ENCODE measurements at regions of chr7 and their contacts with region 1.

Region 1: DNA sequence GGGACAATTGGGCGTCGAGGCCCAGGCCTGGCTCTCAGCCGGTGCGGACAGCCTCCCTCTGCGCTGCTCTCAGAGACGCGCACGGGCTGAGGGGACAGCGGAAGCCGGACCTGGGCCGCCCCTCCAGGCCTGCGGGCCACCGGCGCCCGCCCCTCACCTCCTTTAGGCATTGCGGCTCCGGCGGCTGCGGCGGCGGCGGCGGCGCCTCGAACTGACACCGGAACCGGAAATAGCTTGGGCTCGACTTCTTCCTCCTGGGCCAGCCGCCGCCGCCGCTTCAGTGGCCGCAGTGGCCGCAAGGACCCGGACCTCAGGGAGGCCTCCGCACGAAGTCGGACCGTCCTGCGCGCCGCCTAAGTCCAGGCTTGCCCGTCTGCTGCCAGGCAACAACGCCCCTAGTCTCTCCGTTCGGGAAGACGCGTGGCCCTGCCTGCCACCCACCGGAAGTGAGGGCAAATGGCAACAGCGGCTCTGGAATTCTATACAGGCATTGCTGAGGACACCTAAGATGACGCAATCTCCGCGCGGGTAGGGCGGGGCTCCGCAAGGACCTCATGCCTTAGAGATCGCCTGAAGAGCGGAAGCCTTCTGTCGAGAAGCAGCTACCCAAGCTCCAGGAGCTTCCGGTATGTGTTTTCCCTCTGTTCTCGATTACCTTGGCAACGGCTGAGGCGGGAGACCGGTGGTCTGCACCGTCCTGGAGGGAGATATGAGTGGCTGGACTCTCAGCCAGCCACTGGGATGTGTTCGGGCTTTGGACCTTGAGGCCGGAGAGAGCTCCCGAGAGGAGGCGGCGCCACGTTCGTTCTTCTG is at the starts of genes BUD31 and PDAP1:
- DNase-seq: peak; percentile 96
- ATAC-seq: peak; percentile 88
- H3K4me3 Mint-ChIP-seq: peak within 1 kb of the TSS; percentile 100
- H3K27ac Mint-ChIP-seq: peak within 1 kb of the TSS; percentile 99
- H3K4me1 Mint-ChIP-seq: peaks cover 55% of the 10 kb centered on the region
- H3K27me3 Mint-ChIP-seq: no peaks in the 10 kb centered on the region
- CTCF ChIP-seq: no peak
- total RNA-seq, gene BUD31: 93.7 and 113 TPM in 2 replicates
- total RNA-seq, gene PDAP1: 105 and 134 TPM in 2 replicates

Region 2: DNA sequence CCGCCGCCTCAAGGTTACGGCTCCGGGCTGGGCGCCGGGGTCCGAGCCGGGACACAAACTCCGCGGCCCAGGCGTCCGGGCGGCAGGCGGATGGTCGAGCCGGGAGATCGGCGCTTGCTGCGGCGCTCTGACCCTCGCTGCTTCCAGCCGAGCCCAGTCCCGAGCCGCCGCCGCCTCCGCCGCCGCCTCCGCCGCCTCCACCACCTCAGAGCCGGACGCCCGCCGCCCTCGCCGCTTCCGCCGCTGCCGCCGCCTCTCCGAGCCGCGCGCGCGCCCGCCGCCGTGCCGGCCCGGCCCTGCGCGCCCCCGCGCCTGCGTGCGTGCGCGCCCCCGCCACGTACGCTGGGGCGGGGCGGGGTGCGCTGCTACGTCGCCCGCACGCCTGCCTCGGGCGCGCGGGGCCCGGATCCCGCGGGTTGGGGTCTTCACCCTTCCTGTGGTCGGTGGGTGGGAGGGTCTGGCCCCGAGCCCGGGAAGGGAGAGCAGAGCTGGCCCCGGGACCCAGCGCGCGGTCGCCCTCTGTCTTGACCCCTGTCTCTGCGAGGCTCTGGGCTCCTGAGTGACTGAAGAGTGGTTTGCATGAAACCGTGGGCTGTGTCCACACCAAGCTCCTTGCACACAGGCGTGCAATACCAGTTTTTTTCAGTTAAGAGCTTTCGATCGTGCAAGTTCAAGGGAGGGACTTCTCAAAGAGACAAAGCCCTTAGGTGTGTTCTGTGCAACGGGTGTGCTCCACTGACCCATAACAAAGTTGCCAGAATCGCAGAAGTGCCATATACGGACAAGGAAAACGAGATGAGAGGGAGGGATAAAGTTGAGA is 264.5 kb before region 1 on chr7 and contains the start of gene SMURF1:
- CTCF ChIA-PET with region 1: no interaction called
- POLR2A ChIA-PET with region 1: no interaction called
- intact Hi-C with region 1: loop called (anchors 10 kb)
- DNase-seq: peak; percentile 86
- ATAC-seq: peak; percentile 55
- H3K4me3 Mint-ChIP-seq: peak within 1 kb of the TSS; percentile 89
- H3K27ac Mint-ChIP-seq: peak within 1 kb of the TSS; percentile 81
- H3K4me1 Mint-ChIP-seq: peaks cover 39% of the 10 kb centered on the region
- H3K27me3 Mint-ChIP-seq: peaks cover 7% of the 10 kb centered on the region
- CTCF ChIP-seq: no peak
- total RNA-seq, gene SMURF1: 21.6 and 23.1 TPM in 2 replicates

Region 3: GRCh38 chr7:99374103-99375064 is 34.2 kb before region 1 on chr7 and contains the start of gene ARPC1B:
- CTCF ChIA-PET with region 1: interaction called, 4 read pairs
- POLR2A ChIA-PET with region 1: interaction called, 189 read pairs
- intact Hi-C with region 1: loop called (anchors 1 kb)
- DNase-seq: peak; percentile 78
- ATAC-seq: peak; percentile 74
- H3K4me3 Mint-ChIP-seq: peak within 1 kb of the TSS; percentile 83
- H3K27ac Mint-ChIP-seq: peak within 1 kb of the TSS; percentile 79
- H3K4me1 Mint-ChIP-seq: peaks cover 33% of the 10 kb centered on the region
- H3K27me3 Mint-ChIP-seq: no peaks in the 10 kb centered on the region
- CTCF ChIP-seq: no peak
- total RNA-seq, gene ARPC1B: 300 and 312 TPM in 2 replicates

Region 4: GRCh38 chr7:99392677-99393354 is 15.8 kb before region 1 on chr7:
- CTCF ChIA-PET with region 1: interaction called, 5 read pairs
- POLR2A ChIA-PET with region 1: interaction called, 54 read pairs
- intact Hi-C with region 1: loop called (anchors 1 kb)
- DNase-seq: peak; percentile 79
- ATAC-seq: peak; percentile 92
- H3K4me3 Mint-ChIP-seq: peak overlapping the region; percentile 84
- H3K27ac Mint-ChIP-seq: peak overlapping the region; percentile 78
- H3K4me1 Mint-ChIP-seq: peaks cover 28% of the 10 kb centered on the region
- H3K27me3 Mint-ChIP-seq: no peaks in the 10 kb centered on the region
- CTCF ChIP-seq: no peak

Region 5: DNA sequence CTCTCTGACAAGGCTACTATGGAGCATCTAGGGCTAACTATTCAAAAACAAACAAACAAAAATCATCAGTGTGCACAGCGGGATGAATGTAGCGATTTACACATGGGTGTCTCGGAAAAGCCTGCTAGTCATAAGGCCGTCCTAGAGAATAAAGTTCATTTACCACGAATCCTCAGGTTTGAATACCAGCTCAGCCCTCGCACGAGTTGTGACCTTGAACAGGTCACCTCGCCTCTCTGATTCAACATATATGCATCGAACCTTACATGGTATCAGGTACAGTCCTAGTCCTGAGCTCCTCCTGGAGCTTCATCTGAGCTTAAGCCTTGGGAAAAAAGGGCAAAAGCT is 56.8 kb after region 1 on chr7:
- CTCF ChIA-PET with region 1: no interaction called
- POLR2A ChIA-PET with region 1: interaction called, 9 read pairs
- intact Hi-C with region 1: loop called (anchors 1 kb)
- DNase-seq: no peak
- ATAC-seq: no peak
- H3K4me3 Mint-ChIP-seq: peak overlapping the region; percentile 96
- H3K27ac Mint-ChIP-seq: peak overlapping the region; percentile 90
- H3K4me1 Mint-ChIP-seq: peaks cover 36% of the 10 kb centered on the region
- H3K27me3 Mint-ChIP-seq: no peaks in the 10 kb centered on the region
- CTCF ChIP-seq: no peak

Region 6: DNA sequence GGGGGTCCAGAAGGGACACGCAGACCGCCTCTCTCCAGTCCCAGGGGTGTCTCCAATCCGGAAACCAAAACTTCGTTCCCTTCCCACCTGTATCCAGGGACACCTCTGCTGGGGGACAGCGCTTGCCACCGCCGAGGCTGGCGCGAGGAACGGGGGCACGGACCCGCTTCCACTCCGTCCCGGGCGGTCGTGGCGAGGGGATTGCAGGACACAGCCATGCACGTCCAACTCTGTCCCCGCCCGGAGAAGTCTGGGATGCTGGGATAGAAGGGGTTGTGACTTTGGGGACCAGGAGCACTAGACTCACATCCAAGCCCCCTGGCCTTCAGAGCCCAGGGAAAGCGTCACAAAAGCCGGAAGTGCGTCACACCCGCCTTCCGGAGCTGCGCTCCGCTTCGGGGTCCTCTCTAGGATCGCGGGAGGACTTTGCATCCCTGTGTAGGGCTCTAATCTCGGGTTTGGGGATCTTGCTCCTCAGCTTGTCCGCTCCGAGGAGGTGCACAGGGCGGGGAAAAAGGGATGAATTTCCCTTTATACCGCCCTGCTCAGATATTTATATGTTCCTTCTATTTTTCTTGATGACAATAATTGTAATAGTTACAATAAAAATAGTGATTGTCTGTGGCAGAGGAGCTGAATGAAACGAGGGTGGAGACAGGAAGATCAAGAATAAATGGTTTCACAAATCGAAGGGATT is 143.3 kb after region 1 on chr7 and contains the start of gene FAM200A:
- CTCF ChIA-PET with region 1: no interaction called
- POLR2A ChIA-PET with region 1: interaction called, 34 read pairs
- intact Hi-C with region 1: no loop called
- DNase-seq: peak; percentile 78
- ATAC-seq: peak; percentile 98
- H3K4me3 Mint-ChIP-seq: peak within 1 kb of the TSS; percentile 91
- H3K27ac Mint-ChIP-seq: peak within 1 kb of the TSS; percentile 87
- H3K4me1 Mint-ChIP-seq: peaks cover 33% of the 10 kb centered on the region
- H3K27me3 Mint-ChIP-seq: no peaks in the 10 kb centered on the region
- CTCF ChIP-seq: no peak
- total RNA-seq, gene FAM200A: 9.2 and 9.3 TPM in 2 replicates

Measured in activated B cell treated with CpG ODN at 0.5 μM for 24 hours (primary cell).